ENCODE measurements at regions of chr20 and their contacts with region 1.

Region 1: DNA sequence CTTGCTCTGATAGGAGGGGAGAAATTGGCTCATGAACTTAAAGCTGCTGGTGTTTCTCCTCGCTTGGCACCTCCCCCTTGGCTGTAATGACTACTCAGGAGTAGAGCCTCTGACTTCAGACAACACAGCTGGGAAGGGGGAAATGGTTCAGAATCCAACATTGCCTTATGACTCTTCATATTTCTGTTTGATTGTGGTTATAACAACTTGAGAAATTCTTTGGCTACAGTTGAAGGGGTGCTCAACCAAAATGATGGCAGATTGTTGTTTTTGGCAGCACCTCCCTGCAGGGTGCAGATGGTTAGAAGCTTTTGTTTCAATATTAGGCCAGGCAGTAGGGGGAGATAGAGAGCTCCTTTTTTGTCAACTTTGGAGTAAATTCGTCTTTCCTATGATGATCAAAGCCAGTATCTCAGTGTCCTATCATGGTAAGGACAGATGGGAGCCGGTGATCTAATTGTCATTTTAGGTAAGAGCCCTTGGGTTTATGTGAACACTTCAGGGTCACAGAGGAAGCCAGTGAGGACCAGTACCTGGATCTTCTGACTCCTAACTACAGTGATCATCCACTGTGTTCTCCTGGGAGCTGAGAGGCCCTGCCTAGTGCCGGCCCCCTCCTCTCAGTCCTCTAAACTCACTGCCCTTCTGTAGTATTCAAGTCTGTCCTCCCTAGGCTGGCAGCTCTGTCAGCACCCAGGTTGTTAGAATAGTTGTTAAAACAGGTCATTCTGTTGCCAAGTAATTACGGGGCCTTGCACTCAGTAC is 39.9 kb downstream of the RPRD1B start:
- DNase-seq: peak; percentile 25
- H3K4me3 Mint-ChIP-seq: no peak overlapping the region
- H3K27ac Mint-ChIP-seq: no peak overlapping the region
- H3K4me1 Mint-ChIP-seq: peaks cover 2% of the 10 kb centered on the region
- H3K27me3 Mint-ChIP-seq: no peaks in the 10 kb centered on the region

Region 2: GRCh38 chr20:38057351-38057972 is 16.0 kb before region 1 on chr20:
- CTCF ChIA-PET with region 1: interaction called, 10 read pairs
- intact Hi-C with region 1: no loop called
- DNase-seq: peak; percentile 82
- H3K4me3 Mint-ChIP-seq: no peak overlapping the region
- H3K27ac Mint-ChIP-seq: peak overlapping the region; percentile 73
- H3K4me1 Mint-ChIP-seq: peaks cover 40% of the 10 kb centered on the region
- H3K27me3 Mint-ChIP-seq: no peaks in the 10 kb centered on the region

Region 3: DNA sequence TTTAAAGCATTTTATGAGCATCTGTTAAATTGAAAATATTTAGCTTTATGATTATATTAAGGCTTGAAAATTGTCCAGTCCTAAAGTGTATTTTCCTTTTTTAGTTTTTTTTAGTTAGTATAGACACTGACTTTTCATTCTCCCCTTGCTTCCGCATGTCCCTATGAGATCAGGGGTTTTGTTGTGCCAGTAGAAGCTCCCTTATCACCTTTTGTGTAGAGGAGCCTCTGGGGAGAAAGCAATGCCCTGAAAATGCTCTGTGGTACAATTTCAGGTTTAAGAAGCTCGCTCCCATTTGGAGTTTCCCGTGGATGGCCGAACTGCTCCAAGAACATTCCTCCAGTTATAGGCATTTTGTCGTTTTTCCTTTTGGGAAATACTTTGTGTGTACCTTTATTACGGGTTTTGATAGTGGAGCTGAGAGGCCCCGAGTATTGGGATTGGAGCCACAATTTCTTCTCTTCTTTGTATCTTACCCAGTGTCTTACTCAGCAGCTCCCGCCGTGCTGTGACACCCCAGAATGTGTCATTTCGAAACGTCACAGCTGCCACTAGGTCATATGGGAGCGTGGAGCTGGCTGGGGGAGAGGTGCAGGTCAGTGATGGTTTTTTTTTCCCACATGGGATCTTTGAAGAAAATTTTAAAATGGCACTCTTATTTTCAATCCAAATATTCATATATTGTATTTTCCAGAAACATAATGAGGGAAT is 10.0 kb after region 1 on chr20:
- CTCF ChIA-PET with region 1: interaction called, 12 read pairs
- intact Hi-C with region 1: no loop called
- DNase-seq: no peak
- H3K4me3 Mint-ChIP-seq: no peak overlapping the region
- H3K27ac Mint-ChIP-seq: no peak overlapping the region
- H3K4me1 Mint-ChIP-seq: peaks cover 4% of the 10 kb centered on the region
- H3K27me3 Mint-ChIP-seq: no peaks in the 10 kb centered on the region

Measured in activated naive CD4-positive, alpha-beta T cell treated with anti-CD3 and anti-CD28 coated beads for 36 hours (primary cell).